ENCODE measurements at regions of chr6 and their contacts with region 1.

Region 1: DNA sequence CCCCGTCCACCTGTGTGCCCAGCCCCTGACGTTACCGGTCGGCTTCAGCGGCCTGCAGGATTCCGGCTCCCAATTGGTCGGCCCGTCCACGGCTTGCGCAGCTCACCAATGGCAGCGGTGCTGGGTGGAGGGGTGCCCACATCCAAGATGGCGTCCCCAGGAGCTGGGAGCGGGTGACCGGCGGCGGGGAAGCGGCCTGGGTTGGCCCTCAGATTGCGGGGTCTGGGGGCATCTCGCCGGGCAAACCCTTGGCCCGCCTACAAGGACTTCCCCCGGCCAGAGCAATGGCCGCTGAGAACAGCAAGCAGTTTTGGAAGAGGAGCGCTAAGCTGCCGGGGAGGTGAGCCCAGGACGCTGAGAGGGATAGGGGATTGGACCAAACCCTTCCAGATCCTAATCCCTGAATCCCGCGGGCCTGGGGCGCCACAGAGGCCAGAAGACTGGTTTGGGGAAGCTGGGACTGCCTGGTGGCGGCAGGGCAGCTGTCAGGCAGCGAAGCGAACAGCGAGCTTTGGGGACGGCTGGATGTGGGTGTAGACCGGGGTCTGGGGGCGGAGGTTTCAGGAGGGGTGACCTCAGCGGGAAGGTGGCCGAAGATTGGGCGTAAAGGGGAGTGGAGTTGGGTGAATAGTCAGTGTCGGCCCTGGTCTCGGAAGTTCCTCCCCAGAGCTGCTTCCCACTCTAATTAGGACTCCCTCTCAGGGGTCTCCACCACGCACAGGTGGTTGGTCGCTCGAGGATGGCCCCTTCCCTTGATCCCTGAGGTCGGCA is at the starts of genes TBC1D22B and TMEM217:
- DNase-seq: peak; percentile 97 to 100 (median 98)
- ATAC-seq: peak; percentile 98
- H3K4me3 ChIP-seq: peak within 1 kb of the TSS; percentile 91
- H3K27ac ChIP-seq: peak within 1 kb of the TSS; percentile 94
- H3K4me1 ChIP-seq: peaks cover 7 to 14% of the 10 kb centered on the region in 2 experiments; a peak in 4 of 5 replicates
- H3K27me3 ChIP-seq: no peaks in the 10 kb centered on the region
- CTCF ChIP-seq: no peak
- EP300 ChIP-seq: no peak
- POLR2A ChIP-seq: peak; percentile 91
- RAD21 ChIP-seq: peak in 1 of 2 experiments; percentile 47; a peak in 3 of 4 replicates
- polyA plus RNA-seq, gene TBC1D22B: 4.8 to 6.4 TPM
- polyA plus RNA-seq, gene TMEM217: 1.8 to 1.9 TPM

Region 2: DNA sequence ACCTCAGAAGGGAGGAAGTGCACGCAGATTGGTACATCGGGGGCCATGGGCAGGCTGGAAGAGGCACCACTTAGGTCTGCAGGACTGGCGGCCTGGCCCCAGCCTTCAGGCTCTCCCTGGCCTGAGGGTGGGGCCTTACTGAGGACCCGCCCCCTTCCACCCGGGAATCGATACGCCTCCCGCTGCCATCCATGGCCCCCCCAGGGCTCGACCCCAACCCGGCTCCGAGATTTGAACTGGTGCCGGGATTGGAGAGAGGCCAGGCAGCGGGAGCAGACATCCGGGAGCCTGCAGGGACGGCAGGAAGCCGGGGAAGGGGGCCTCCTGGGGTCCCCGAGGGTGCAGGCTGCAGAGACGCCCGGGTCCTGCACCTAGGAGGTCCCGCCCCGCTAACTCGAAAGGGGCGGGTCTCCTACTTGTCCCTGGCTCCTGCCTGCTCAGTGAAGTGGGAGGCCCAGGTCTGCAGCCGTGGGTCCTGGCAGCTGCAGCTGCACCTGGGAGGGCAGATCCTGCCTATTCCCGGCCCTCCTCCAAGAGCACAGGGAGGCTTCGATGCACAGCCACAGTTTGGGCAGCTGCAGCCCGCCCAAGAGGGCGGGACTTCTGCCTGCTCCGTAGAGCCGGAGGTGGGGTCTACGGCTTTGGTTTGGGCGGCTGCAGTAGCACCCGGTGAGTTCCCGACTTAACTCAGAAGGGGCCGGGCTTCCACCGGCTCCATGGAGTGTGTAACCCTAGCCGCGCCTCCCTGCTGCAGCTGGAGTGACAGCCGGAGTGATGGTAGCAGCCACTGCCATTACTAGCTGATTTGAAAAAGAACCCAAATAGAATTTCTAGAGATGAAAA is 35.5 kb before region 1 on chr6:
- CTCF ChIA-PET with region 1: no interaction called
- POLR2A ChIA-PET with region 1: interaction called, 13 read pairs
- in situ Hi-C with region 1: no loop called
- intact Hi-C with region 1: loop called (anchors 2 kb)
- DNase-seq: peak; percentile 91 to 95 (median 93)
- ATAC-seq: peak; percentile 99
- H3K4me3 ChIP-seq: peak overlapping the region; percentile 52
- H3K27ac ChIP-seq: no peak overlapping the region
- H3K4me1 ChIP-seq: peaks cover 14 to 22% of the 10 kb centered on the region in 2 experiments; a peak in 4 of 5 replicates
- H3K27me3 ChIP-seq: no peaks in the 10 kb centered on the region
- CTCF ChIP-seq: peak in 2 of 3 experiments; percentile 14 to 44; a peak in 2 of 6 replicates
- EP300 ChIP-seq: no peak; the same call in 1 of the 2 replicates
- POLR2A ChIP-seq: no peak
- RAD21 ChIP-seq: peak; percentile 29 to 43; a peak in 3 of 4 replicates

Region 3: DNA sequence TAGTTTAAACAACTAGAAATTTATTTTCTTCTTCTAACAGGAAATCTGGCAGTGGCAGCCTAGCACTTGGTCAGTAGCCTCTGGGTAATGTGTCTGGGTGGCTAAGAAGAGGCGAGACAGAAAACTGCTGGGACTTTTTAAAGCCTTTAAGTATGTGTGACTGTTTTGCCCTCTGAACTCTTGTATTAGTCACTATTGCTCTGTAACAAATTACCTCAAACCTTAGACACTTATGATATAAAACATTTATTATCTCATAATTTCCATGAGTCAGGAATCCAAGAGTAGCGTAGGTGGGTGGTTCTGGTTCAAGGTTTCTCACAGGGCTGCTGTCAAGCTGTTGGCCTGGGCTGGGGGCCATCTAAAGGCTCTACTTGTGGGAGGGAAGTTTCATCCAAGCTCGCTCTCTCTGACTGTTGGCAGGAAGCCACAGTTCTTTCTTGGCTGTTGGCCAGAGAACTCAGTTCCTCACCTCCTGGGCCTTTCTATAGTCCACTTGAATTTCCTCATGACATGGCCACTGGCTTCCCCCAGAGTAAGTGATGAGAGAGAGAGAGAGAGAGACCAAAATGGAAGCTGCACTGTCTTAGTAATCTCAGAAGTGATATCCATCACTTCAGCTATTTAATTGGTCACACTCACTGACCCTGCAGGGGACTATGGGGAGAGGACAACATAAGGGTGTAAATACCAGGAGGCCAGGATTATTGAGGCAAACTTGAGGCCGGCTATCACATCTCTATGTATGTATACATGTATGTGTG is 17.7 kb before region 1 on chr6:
- CTCF ChIA-PET with region 1: no interaction called
- POLR2A ChIA-PET with region 1: interaction called, 59 read pairs
- in situ Hi-C with region 1: no loop called
- intact Hi-C with region 1: no loop called
- DNase-seq: peak; percentile 75 to 98 (median 82)
- ATAC-seq: peak; percentile 78
- H3K4me3 ChIP-seq: no peak overlapping the region
- H3K27ac ChIP-seq: peak overlapping the region; percentile 66
- H3K4me1 ChIP-seq: peaks cover 15 to 57% of the 10 kb centered on the region in 2 experiments
- H3K27me3 ChIP-seq: no peaks in the 10 kb centered on the region
- CTCF ChIP-seq: no peak
- EP300 ChIP-seq: no peak; the same call in 1 of the 2 replicates
- POLR2A ChIP-seq: no peak
- RAD21 ChIP-seq: peak; percentile 22 to 31; a peak in 3 of 4 replicates

Region 4: GRCh38 chr6:37269105-37269504 is 11.3 kb after region 1 on chr6:
- CTCF ChIA-PET with region 1: no interaction called
- POLR2A ChIA-PET with region 1: interaction called, 14 read pairs
- in situ Hi-C with region 1: no loop called
- intact Hi-C with region 1: no loop called
- DNase-seq: no peak
- ATAC-seq: no peak
- H3K4me3 ChIP-seq: no peak overlapping the region
- H3K27ac ChIP-seq: no peak overlapping the region
- H3K4me1 ChIP-seq: no peaks in the 10 kb centered on the region
- H3K27me3 ChIP-seq: no peaks in the 10 kb centered on the region
- CTCF ChIP-seq: no peak
- EP300 ChIP-seq: no peak
- POLR2A ChIP-seq: no peak
- RAD21 ChIP-seq: no peak

Region 5: DNA sequence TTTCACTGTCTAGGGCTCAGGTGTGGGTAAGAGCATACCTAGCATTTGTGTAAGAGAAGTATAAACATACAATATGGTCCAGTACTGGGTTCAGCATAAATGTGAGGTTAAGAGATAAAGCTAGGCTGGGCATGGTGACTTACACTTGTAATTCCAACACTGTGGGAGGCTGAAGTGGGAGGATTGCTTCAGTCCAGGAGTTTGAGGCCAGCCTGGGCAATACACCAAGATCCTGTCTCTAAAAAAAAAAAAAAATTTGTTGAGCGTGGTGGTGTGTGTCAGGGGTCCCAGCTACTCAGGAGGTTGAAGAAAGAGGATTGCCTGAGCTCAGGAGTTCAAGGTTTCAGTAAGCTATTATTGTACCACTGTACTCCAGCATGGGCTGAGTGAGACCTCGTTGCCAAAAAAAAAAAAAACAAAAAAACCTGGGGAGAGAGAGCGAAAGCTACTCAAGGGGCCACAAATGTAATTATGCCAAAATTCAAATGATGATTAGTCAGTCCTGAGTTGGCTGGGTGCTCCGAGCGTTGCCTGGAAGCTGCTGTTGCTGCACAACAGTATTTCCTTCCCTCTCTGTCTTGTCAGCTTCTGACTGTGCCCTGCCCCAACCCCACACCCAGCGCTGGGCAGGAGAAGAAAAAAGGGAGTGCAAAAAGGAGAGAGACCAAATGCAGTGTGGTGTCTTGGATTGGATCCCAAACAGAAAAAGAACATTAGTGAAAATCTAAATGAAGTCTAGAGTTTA is 199.2 kb after region 1 on chr6:
- CTCF ChIA-PET with region 1: no interaction called
- POLR2A ChIA-PET with region 1: no interaction called
- in situ Hi-C with region 1: no loop called
- intact Hi-C with region 1: no loop called
- DNase-seq: no peak
- ATAC-seq: no peak
- H3K4me3 ChIP-seq: no peak overlapping the region
- H3K27ac ChIP-seq: no peak overlapping the region
- H3K4me1 ChIP-seq: peaks cover 5 to 26% of the 10 kb centered on the region in 2 experiments
- H3K27me3 ChIP-seq: no peaks in the 10 kb centered on the region
- CTCF ChIP-seq: no peak
- EP300 ChIP-seq: no peak
- POLR2A ChIP-seq: no peak
- RAD21 ChIP-seq: no peak

Measured in K562 (cell line).